Posterior vena cava (tissue), 2 donors: ENCODE measurements at regions of chr6 and their contacts with region 1.

Region 1: GRCh38 chr6:12222405-12223366 is 67.5 kb upstream of the EDN1 start:
- DNase-seq: no peak

Region 2: DNA sequence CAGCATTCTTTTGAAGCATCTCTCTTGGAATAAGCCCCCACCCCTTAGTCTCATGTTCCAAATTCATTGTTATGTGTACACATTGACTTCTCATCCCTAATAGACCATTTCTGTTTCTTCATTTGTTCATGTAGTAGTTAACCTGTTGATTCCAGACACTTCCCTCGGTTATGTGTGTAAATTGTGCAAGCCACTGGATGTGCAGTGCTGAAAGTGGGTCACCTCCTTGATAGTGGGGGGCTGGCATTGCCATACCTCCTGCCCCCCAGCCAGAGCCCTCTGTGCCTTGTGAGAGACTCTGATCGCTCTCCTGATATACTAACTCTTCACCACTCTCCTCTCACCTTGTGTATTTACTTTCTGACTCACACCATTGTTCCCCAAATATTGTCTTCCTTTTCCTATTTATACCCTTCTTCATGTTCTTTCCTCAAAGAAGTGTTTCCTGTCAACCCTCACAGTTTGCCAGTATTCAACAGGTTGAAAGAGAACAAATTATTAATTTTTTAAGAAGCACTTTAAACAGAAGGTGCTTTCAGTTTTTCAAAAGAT is 151.5 kb before region 1 on chr6:
- intact Hi-C with region 1: loop called in 1 of 2 experiments (anchors 5 kb)
- DNase-seq: no peak

Region 3: DNA sequence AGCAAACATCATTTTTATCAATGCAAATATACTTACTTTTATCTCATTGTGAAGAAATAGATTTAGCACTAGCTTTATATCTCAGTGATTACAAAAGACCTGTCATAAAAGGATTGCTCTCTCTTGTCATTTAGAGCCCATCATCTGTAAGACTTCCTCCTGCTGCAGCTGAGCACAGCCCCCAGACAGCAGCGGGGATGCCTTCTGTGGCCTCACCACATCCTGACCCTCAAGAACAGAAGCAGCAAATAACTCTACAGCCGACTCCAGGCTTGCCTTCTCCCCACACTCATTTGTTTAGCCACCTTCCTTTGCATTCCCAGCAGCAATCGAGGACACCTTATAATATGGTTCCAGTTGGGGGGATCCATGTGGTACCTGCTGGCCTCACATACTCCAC is 59.5 kb before region 1 on chr6:
- intact Hi-C with region 1: no loop called
- DNase-seq: peak; percentile 20